ENCODE measurements at regions of chr7 and their contacts with region 1.

Region 1: GRCh38 chr7:73858807-73859206 is 2.2 kb upstream of the TMEM270 start:
- DNase-seq: no peak
- H3K4me3 ChIP-seq: no peak overlapping the region
- H3K27ac ChIP-seq: no peak overlapping the region
- H3K4me1 ChIP-seq: no peaks in the 10 kb centered on the region
- H3K27me3 ChIP-seq: no peaks in the 10 kb centered on the region
- CTCF ChIP-seq: no peak

Region 2: DNA sequence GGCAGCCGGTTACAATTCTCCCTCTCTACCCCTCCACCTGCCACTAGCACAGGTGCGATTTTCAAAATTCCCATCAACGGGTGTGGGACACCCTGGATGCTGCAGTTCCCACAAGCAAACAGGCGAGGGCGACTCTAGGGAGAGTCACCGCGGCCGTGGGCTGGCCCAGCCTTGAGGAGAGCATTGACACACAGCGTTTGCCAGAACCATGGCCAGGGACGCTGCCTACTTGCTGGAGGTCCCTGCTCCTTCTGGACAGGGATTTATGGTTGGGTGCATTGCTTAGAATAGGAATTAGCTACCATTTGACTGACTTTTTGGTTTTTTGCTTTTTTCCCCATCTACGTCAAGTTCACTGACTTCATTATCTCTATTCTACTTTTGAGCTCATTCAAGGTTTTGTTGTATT is 47.0 kb before region 1 on chr7:
- intact Hi-C with region 1: loop called (anchors 5 kb)
- DNase-seq: peak; percentile 90
- H3K4me3 ChIP-seq: no peak overlapping the region
- H3K27ac ChIP-seq: peak overlapping the region; percentile 91
- H3K4me1 ChIP-seq: no peaks in the 10 kb centered on the region
- H3K27me3 ChIP-seq: no peaks in the 10 kb centered on the region
- CTCF ChIP-seq: peak; percentile 91

Region 3: GRCh38 chr7:74133671-74134048 is 274.9 kb after region 1 on chr7:
- intact Hi-C with region 1: no loop called
- DNase-seq: no peak
- H3K4me3 ChIP-seq: no peak overlapping the region
- H3K27ac ChIP-seq: no peak overlapping the region
- H3K4me1 ChIP-seq: no peaks in the 10 kb centered on the region
- H3K27me3 ChIP-seq: no peaks in the 10 kb centered on the region
- CTCF ChIP-seq: no peak

Measured in colonic mucosa (tissue), 4 donors.